ENCODE measurements at regions of chr7 and their contacts with region 1.

Region 1: GRCh38 chr7:94395141-94396036 is 694 bp downstream of the COL1A2 start:
- DNase-seq: peak; percentile 85
- H3K4me3 Mint-ChIP-seq: peak overlapping the region; percentile 76
- H3K27ac Mint-ChIP-seq: peak overlapping the region; percentile 65
- H3K4me1 Mint-ChIP-seq: peaks cover 28% of the 10 kb centered on the region
- H3K27me3 Mint-ChIP-seq: peaks cover 2% of the 10 kb centered on the region

Region 2: DNA sequence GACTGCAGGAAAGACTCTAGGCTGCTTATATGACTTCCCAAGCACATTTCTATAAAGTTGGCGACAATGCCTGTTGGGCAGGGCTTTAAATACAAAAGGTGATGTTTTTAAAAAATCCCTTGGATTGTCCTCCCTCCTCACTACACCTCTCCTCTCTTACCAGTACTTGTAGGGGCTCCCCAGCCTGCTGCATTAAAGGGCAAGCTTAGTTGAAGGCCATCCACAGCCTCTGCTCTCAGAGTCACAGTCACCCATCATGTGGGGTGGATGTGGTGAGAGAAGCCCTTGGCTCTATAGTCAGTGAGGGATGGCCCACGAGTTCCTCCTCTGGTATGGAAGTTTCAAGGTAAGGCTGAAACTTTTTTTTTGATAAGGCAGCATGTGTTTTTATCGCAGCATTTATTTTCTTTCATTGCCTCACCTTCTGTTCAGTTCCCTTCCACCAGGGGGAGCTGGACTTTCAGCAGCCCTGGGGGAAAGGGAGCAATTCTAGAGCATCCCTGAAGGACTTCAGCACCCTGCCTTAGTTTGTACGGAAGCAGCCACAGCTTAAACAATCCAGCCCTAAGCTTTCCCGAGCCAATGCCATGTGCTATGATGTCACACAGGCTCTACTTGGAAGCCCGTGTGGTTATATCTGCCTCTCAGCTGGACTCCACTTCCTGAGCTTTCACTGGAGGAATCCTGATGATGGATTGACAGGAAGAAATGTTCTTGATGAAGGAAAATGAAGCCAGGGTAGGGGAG is 952.7 kb before region 1 on chr7:
- intact Hi-C with region 1: loop called (anchors 2 kb)
- DNase-seq: peak; percentile 81
- H3K4me3 Mint-ChIP-seq: no peak overlapping the region
- H3K27ac Mint-ChIP-seq: no peak overlapping the region
- H3K4me1 Mint-ChIP-seq: no peaks in the 10 kb centered on the region
- H3K27me3 Mint-ChIP-seq: peaks cover 2% of the 10 kb centered on the region

Region 3: GRCh38 chr7:94004024-94004951 is 391.1 kb before region 1 on chr7 and contains the start of gene BET1:
- intact Hi-C with region 1: loop called (anchors 1 kb)
- DNase-seq: peak; percentile 98
- H3K4me3 Mint-ChIP-seq: peak within 1 kb of the TSS; percentile 94
- H3K27ac Mint-ChIP-seq: peak within 1 kb of the TSS; percentile 96
- H3K4me1 Mint-ChIP-seq: peaks cover 20% of the 10 kb centered on the region
- H3K27me3 Mint-ChIP-seq: peaks cover 17% of the 10 kb centered on the region
- total RNA-seq, gene BET1: 19.1 and 20.0 TPM in 2 replicates

Region 4: GRCh38 chr7:94170836-94171235 is 224.6 kb before region 1 on chr7:
- intact Hi-C with region 1: loop called (anchors 10 kb)
- DNase-seq: no peak
- H3K4me3 Mint-ChIP-seq: no peak overlapping the region
- H3K27ac Mint-ChIP-seq: no peak overlapping the region
- H3K4me1 Mint-ChIP-seq: peaks cover 7% of the 10 kb centered on the region
- H3K27me3 Mint-ChIP-seq: peaks cover 7% of the 10 kb centered on the region

Region 5: GRCh38 chr7:94509879-94510581 is 114.6 kb after region 1 on chr7:
- intact Hi-C with region 1: loop called (anchors 5 kb)
- DNase-seq: peak; percentile 90
- H3K4me3 Mint-ChIP-seq: peak overlapping the region; percentile 80
- H3K27ac Mint-ChIP-seq: peak overlapping the region; percentile 88
- H3K4me1 Mint-ChIP-seq: peaks cover 34% of the 10 kb centered on the region
- H3K27me3 Mint-ChIP-seq: no peaks in the 10 kb centered on the region

Region 6: GRCh38 chr7:94620703-94621118 is 225.3 kb after region 1 on chr7:
- intact Hi-C with region 1: no loop called
- DNase-seq: peak; percentile 77
- H3K4me3 Mint-ChIP-seq: peak overlapping the region; percentile 11
- H3K27ac Mint-ChIP-seq: peak overlapping the region; percentile 38
- H3K4me1 Mint-ChIP-seq: peaks cover 11% of the 10 kb centered on the region
- H3K27me3 Mint-ChIP-seq: peaks cover 8% of the 10 kb centered on the region

Region 7: DNA sequence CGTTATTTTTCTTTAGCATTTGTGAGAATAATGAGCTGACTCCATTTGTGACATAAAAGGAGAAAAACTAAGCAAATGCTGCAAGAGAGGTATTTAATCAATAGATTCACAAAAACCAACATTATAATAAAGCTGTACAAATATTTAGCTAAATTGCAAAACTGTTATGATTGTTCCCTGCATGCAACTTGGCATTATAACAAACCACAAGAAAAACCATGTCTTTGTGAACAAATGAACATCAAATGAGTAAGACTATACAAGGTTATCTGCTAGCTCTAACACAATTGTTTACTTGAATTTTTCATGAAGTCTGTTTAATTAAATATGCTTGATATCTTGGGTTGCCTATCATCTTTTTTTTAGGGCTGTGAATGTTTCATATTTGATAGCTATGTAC is 461.3 kb after region 1 on chr7:
- intact Hi-C with region 1: no loop called
- DNase-seq: no peak
- H3K4me3 Mint-ChIP-seq: no peak overlapping the region
- H3K27ac Mint-ChIP-seq: no peak overlapping the region
- H3K4me1 Mint-ChIP-seq: no peaks in the 10 kb centered on the region
- H3K27me3 Mint-ChIP-seq: no peaks in the 10 kb centered on the region